Spleen (tissue), 13 donors: ENCODE measurements at regions of chr5 and their contacts with region 1.

Region 1: GRCh38 chr5:139633295-139634027 is 14.7 kb upstream of the CXXC5 start:
- DNase-seq: peak; percentile 90
- H3K4me3 ChIP-seq: no peak overlapping the region
- H3K27ac ChIP-seq: peak overlapping the region in 5 of 8 donors; percentile 89 to 96 (median 91)
- H3K4me1 ChIP-seq: peaks cover 43 to 61% (median 55%) of the 10 kb centered on the region in 6 donors
- H3K27me3 ChIP-seq: peaks cover 0 to 9% (median 0%) of the 10 kb centered on the region in 7 donors
- CTCF ChIP-seq: peak; percentile 90 to 99 (median 97)
- POLR2A ChIP-seq: no peak

Region 2: DNA sequence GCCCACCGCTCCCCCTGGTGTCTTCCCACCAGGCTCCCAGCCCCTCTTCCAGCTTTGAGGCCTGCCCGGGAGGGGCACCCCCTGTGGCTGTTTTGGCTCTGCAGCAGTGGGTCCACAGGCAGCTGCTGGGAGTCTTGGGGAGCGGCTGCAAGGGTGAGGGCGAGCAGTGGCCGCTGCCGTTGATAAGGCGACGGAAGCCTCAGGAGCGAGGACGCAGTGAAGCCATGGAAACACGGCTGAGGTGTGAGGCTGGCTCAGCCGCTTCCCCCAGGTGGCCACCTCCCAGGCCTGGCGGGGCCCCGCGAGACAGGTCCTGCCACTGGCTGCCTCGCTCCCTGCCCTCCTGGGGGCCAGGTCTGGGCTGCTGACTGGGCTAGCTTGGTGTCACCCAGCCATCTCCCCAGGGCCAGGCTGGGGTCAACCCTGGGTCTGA is 56.2 kb after region 1 on chr5:
- intact Hi-C with region 1: loop called (anchors 5 kb)
- DNase-seq: peak; percentile 86
- H3K4me3 ChIP-seq: peak overlapping the region in 1 of 8 donors; percentile 19
- H3K27ac ChIP-seq: peak overlapping the region in 7 of 8 donors; percentile 43 to 74 (median 70)
- H3K4me1 ChIP-seq: peaks cover 25 to 81% (median 59%) of the 10 kb centered on the region in 6 donors
- H3K27me3 ChIP-seq: no peaks in the 10 kb centered on the region
- CTCF ChIP-seq: no peak
- POLR2A ChIP-seq: no peak

Region 3: GRCh38 chr5:139765409-139766217 is 132.2 kb after region 1 on chr5:
- intact Hi-C with region 1: loop called (anchors 1 kb)
- DNase-seq: peak; percentile 96
- H3K4me3 ChIP-seq: peak overlapping the region; percentile 44 to 81 (median 54)
- H3K27ac ChIP-seq: peak overlapping the region; percentile 29 to 81 (median 62)
- H3K4me1 ChIP-seq: peaks cover 0 to 60% (median 32%) of the 10 kb centered on the region in 6 donors
- H3K27me3 ChIP-seq: peaks cover 0 to 29% (median 11%) of the 10 kb centered on the region in 7 donors
- CTCF ChIP-seq: peak; percentile 89 to 99 (median 96)
- POLR2A ChIP-seq: no peak